ENCODE measurements at regions of chr22 and their contacts with region 1.

Region 1: DNA sequence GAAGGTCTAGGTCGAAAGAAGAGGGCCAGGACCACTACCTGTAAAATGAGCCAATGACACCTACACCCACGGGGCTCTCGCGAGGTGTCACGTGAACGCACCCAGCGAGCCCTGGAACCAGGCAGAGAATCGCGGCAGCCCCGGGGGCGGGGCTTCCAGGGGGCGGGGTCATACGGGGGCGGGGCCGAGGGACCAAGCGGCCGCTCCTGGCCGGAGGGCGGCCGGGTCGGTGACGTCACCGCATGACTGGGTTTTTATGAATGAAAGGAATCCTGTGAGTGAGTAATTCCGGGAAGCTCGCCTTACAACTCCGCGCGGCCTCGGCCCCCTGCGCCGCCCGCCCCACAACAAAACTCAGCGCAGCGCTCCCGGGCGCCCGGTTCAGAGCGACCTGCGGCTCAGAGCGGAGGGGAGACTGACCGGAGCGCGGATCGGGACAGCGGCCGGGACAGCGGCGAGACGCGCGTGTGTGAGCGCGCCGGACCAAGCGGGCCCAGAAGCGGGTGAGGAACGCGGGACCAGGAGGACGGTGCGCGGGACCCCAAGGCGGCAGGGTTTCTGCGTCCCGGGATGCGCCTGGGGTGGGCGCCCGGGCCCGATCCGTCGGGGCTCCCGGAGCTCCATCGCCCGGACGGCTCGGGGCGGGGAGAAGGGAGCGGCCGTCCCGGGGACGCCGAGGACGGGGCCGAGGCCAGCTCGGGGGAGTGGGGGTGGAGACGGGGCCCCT is at the start of gene MAFF:
- DNase-seq: peak; percentile 81
- H3K4me3 Mint-ChIP-seq: peak within 1 kb of the TSS; percentile 83
- H3K27ac Mint-ChIP-seq: peak within 1 kb of the TSS; percentile 87
- H3K4me1 Mint-ChIP-seq: peaks cover 26% of the 10 kb centered on the region
- H3K27me3 Mint-ChIP-seq: no peaks in the 10 kb centered on the region
- total RNA-seq, gene MAFF: 13.5 and 15.3 TPM in 2 replicates

Region 2: GRCh38 chr22:38181453-38182247 is 20.2 kb before region 1 on chr22 and contains the start of gene PLA2G6:
- intact Hi-C with region 1: loop called (anchors 1 kb)
- DNase-seq: peak; percentile 99
- H3K4me3 Mint-ChIP-seq: peak within 1 kb of the TSS; percentile 96
- H3K27ac Mint-ChIP-seq: peak within 1 kb of the TSS; percentile 97
- H3K4me1 Mint-ChIP-seq: peaks cover 32% of the 10 kb centered on the region
- H3K27me3 Mint-ChIP-seq: peaks cover 5% of the 10 kb centered on the region
- total RNA-seq, gene PLA2G6: 32.8 and 36.0 TPM in 2 replicates